Naive thymus-derived CD4-positive, alpha-beta T cell (primary cell): ENCODE measurements at regions of chr9 and their contacts with region 1.

Region 1: DNA sequence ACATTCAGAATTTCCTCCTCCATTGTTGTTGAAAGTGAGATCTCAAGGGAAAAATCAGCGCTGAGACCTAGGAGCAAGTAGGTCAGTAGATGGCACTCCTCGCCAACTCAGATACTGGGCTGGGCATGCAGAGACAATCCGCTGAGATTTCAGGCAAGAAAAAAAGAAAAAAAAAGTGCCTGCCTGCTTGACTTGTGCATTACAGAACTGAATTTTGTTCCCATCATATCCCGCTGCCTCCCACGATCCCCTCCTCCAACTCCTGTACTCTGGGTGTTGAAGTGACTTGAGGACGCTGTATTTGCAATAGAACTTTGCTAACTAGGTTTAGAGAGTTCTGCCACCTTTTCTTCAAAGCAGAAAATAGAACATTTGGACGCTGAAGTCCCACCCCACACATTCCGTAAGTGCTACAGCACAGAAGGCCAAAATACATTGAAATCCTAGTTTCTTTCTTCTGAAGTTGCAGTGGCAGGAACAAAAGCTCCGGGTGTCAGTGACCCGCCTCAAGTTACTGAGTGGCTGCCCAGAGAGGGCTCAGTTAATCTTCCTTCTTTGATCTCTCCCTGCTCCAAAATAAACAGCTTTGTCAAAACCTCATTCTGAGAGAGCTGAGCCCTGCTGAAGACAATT is 265.8 kb downstream of the MLLT3 start:
- DNase-seq: peak; percentile 8 to 78 (median 66)
- ATAC-seq: peak; percentile 82
- H3K4me3 ChIP-seq: no peak overlapping the region
- H3K4me3 Mint-ChIP-seq: peak overlapping the region in 7 of 10 donors; percentile 12 to 76 (median 55)
- H3K27ac ChIP-seq: no peak overlapping the region
- H3K27ac Mint-ChIP-seq: peak overlapping the region; percentile 5 to 94 (median 79)
- H3K4me1 ChIP-seq: peaks cover 0 to 29% of the 10 kb centered on the region in 2 donors
- H3K4me1 Mint-ChIP-seq: peaks cover 24 to 83% (median 55%) of the 10 kb centered on the region in 7 donors
- H3K27me3 ChIP-seq: no peaks in the 10 kb centered on the region
- H3K27me3 Mint-ChIP-seq: no peaks in the 10 kb centered on the region

Region 2: GRCh38 chr9:20043035-20043434 is 313.5 kb before region 1 on chr9:
- CTCF ChIA-PET with region 1: no interaction called
- POLR2A ChIA-PET with region 1: no interaction called
- intact Hi-C with region 1: loop called in 1 of 2 experiments (anchors 10 kb)
- DNase-seq: peak in 6 of 9 donors; percentile 6 to 46 (median 34)
- ATAC-seq: peak; percentile 59
- H3K4me3 ChIP-seq: peak overlapping the region; percentile 28
- H3K4me3 Mint-ChIP-seq: peak overlapping the region; percentile 61 to 85 (median 80)
- H3K27ac ChIP-seq: peak overlapping the region; percentile 17
- H3K27ac Mint-ChIP-seq: peak overlapping the region; percentile 84 to 95 (median 91)
- H3K4me1 ChIP-seq: peaks cover 0 to 12% of the 10 kb centered on the region in 2 donors
- H3K4me1 Mint-ChIP-seq: peaks cover 9 to 43% (median 27%) of the 10 kb centered on the region in 7 donors
- H3K27me3 ChIP-seq: no peaks in the 10 kb centered on the region
- H3K27me3 Mint-ChIP-seq: no peaks in the 10 kb centered on the region

Region 3: DNA sequence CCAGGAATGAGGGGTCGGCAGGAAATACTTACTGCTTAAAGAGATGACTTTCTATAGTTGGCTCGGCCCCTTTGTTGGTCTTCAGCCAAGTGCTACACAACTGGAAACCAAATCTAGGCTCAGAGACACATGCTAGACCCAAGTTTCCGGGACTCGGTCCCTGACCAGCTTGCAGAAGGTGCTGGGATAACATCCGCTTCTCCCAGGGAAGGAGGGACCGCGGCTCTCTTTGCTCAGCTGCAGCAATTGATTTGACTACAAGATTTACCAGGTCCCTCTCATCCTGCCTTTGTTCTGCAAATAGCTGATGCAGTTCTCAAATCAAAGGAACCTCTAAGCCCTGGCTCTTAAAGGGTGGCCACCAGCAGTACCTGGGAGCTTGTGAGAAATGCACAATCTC is 48.9 kb before region 1 on chr9:
- CTCF ChIA-PET with region 1: no interaction called
- POLR2A ChIA-PET with region 1: no interaction called
- intact Hi-C with region 1: no loop called
- DNase-seq: no peak
- ATAC-seq: no peak
- H3K4me3 ChIP-seq: no peak overlapping the region
- H3K4me3 Mint-ChIP-seq: no peak overlapping the region
- H3K27ac ChIP-seq: no peak overlapping the region
- H3K27ac Mint-ChIP-seq: peak overlapping the region in 1 of 9 donors; percentile 62
- H3K4me1 ChIP-seq: no peaks in the 10 kb centered on the region
- H3K4me1 Mint-ChIP-seq: peaks cover 4 to 37% (median 19%) of the 10 kb centered on the region in 7 donors
- H3K27me3 ChIP-seq: no peaks in the 10 kb centered on the region
- H3K27me3 Mint-ChIP-seq: peaks cover 0 to 7% (median 0%) of the 10 kb centered on the region in 5 donors

Region 4: DNA sequence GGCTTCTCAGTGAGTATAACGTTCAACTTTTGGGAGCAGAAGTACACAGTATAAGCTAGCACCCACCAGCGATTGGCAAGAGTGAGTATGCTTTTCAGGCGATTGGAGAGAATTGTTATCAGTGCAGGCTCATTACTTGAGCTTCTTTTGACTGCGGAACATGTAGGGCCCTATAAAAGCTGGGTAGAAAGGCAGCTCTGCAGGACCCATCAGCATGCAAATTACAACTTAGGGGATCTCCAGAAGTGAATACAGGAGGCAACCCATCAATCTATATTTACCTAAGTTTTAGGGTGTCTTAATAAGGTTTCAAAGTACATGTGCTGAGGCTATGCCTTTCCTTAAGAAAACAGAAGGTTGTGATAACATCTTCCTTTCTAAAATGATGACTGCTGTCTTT is 40.8 kb after region 1 on chr9:
- CTCF ChIA-PET with region 1: interaction called, 22 read pairs
- POLR2A ChIA-PET with region 1: interaction called, 3 read pairs
- intact Hi-C with region 1: loop called in 1 of 2 experiments (anchors 2 kb)
- DNase-seq: no peak
- ATAC-seq: no peak
- H3K4me3 ChIP-seq: no peak overlapping the region
- H3K4me3 Mint-ChIP-seq: peak overlapping the region in 4 of 10 donors; percentile 33 to 72 (median 56)
- H3K27ac ChIP-seq: no peak overlapping the region
- H3K27ac Mint-ChIP-seq: peak overlapping the region in 5 of 9 donors; percentile 48 to 92 (median 68)
- H3K4me1 ChIP-seq: peaks cover 0 to 56% of the 10 kb centered on the region in 2 donors
- H3K4me1 Mint-ChIP-seq: peaks cover 41 to 88% (median 77%) of the 10 kb centered on the region in 7 donors
- H3K27me3 ChIP-seq: no peaks in the 10 kb centered on the region
- H3K27me3 Mint-ChIP-seq: no peaks in the 10 kb centered on the region

Region 5: DNA sequence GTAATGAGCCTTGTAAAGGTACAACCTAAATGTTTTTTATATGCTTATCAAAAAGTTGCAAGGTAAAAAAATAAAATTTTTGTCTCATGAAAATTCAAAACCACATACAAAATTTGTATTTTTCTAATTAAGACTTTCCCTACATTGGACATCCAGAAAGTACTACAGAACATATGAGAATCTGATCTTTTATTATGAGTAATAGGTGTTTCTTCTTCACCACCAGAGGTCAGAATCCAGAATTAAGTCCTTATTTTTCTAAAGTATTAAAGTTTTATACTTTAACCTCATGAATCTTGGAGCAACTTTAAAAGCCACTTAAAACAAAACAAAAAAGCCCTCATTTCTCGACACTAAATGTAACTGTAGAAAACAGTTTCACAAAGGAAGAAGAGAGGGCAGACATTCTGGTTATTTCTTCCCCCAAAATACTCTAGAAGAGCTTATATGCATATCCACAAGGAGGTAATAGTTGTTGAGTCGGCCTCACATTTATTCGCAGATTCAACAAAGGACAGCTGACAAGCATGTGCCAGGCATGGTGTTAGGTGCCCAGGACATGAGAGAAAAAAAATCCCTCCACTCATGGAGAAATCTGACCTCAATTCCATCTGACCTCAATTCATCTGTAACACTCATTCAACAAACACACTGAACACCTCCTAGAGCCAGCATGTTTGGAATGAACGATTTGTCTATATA is 196.5 kb after region 1 on chr9:
- CTCF ChIA-PET with region 1: no interaction called
- POLR2A ChIA-PET with region 1: no interaction called
- intact Hi-C with region 1: loop called in 1 of 2 experiments (anchors 5 kb)
- DNase-seq: peak in 1 of 9 donors; percentile 28
- ATAC-seq: no peak
- H3K4me3 ChIP-seq: no peak overlapping the region
- H3K4me3 Mint-ChIP-seq: peak overlapping the region; percentile 27 to 84 (median 46)
- H3K27ac ChIP-seq: no peak overlapping the region
- H3K27ac Mint-ChIP-seq: peak overlapping the region; percentile 2 to 79 (median 54)
- H3K4me1 ChIP-seq: peaks cover 23 to 33% of the 10 kb centered on the region in 2 donors
- H3K4me1 Mint-ChIP-seq: peaks cover 58 to 86% (median 79%) of the 10 kb centered on the region in 7 donors
- H3K27me3 ChIP-seq: no peaks in the 10 kb centered on the region
- H3K27me3 Mint-ChIP-seq: no peaks in the 10 kb centered on the region

Region 6: GRCh38 chr9:20884985-20885593 is 528.6 kb after region 1 on chr9:
- CTCF ChIA-PET with region 1: no interaction called
- POLR2A ChIA-PET with region 1: no interaction called
- intact Hi-C with region 1: loop called in 1 of 2 experiments (anchors 1 kb)
- DNase-seq: peak in 8 of 9 donors; percentile 23 to 54 (median 43)
- ATAC-seq: peak; percentile 71
- H3K4me3 ChIP-seq: no peak overlapping the region
- H3K4me3 Mint-ChIP-seq: no peak overlapping the region
- H3K27ac ChIP-seq: no peak overlapping the region
- H3K27ac Mint-ChIP-seq: no peak overlapping the region
- H3K4me1 ChIP-seq: no peaks in the 10 kb centered on the region
- H3K4me1 Mint-ChIP-seq: no peaks in the 10 kb centered on the region
- H3K27me3 ChIP-seq: no peaks in the 10 kb centered on the region
- H3K27me3 Mint-ChIP-seq: no peaks in the 10 kb centered on the region